ENCODE measurements at regions of chr22 and their contacts with region 1.

Region 1: DNA sequence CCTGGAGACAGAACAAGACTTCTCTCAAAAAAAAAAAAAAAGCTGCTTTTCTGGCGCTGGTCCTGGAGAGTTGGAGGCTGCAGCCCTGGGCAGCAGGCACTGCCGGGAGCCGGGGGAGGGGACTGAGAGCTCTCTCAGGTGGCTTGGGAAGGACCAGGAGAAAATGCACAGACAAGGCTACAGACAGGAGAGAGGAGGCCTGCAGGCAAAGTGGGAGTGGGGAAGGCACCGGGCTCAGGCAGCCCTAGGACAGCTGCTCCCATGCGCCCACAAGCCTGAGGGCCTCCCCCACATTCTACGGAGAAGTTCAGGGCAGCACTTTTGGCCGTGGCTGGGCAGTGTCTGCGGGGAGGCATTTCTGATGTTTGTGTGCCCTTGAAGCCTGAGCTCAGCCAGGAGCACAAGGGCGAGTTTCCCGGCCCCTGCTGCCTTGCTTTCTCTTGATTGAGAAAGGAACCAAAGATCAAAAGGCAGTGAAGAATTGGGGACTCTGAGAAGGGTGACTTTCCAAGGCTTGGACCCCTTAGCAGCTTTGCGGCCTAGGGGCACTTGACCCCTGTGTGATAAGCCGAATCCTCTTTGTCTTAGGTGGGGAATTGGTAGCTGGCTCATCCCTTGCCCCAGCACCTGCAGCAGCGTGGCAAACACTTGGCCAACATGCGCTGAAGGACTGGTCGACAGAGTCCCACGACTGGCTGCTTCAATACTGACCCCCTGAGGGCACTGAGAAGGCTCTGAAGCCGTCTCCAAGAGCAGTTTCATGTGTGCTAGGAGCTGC is 35.3 kb downstream of the PPM1F start:
- DNase-seq: peak; percentile 81 to 84
- H3K4me3 ChIP-seq: no peak overlapping the region
- H3K27ac ChIP-seq: no peak overlapping the region
- H3K4me1 ChIP-seq: peaks cover 3 to 10% of the 10 kb centered on the region in 2 donors
- H3K27me3 ChIP-seq: no peaks in the 10 kb centered on the region
- CTCF ChIP-seq: no peak
- POLR2A ChIP-seq: no peak

Region 2: GRCh38 chr22:21876486-21877176 is 40.7 kb before region 1 on chr22:
- intact Hi-C with region 1: no loop called
- DNase-seq: no peak
- H3K4me3 ChIP-seq: no peak overlapping the region
- H3K27ac ChIP-seq: no peak overlapping the region
- H3K4me1 ChIP-seq: no peaks in the 10 kb centered on the region
- H3K27me3 ChIP-seq: no peaks in the 10 kb centered on the region
- CTCF ChIP-seq: no peak
- POLR2A ChIP-seq: no peak

Region 3: GRCh38 chr22:21972293-21972779 is 55.0 kb after region 1 on chr22:
- intact Hi-C with region 1: loop called (anchors 5 kb)
- DNase-seq: peak in 1 of 2 donors; percentile 17
- H3K4me3 ChIP-seq: no peak overlapping the region
- H3K27ac ChIP-seq: no peak overlapping the region
- H3K4me1 ChIP-seq: no peaks in the 10 kb centered on the region
- H3K27me3 ChIP-seq: no peaks in the 10 kb centered on the region
- CTCF ChIP-seq: peak in 5 of 6 experiments; percentile 20 to 75 (median 38)
- POLR2A ChIP-seq: no peak

Measured in thyroid gland (tissue), 4 donors.